ENCODE measurements at regions of chr2 and their contacts with region 1.

Region 1: GRCh38 chr2:177353187-177353478 is 39.4 kb upstream of the AGPS start:
- DNase-seq: no peak
- ATAC-seq: no peak
- H3K4me3 Mint-ChIP-seq: no peak overlapping the region
- H3K27ac Mint-ChIP-seq: no peak overlapping the region
- H3K4me1 Mint-ChIP-seq: peaks cover 3% of the 10 kb centered on the region
- H3K27me3 Mint-ChIP-seq: no peaks in the 10 kb centered on the region
- CTCF ChIP-seq: no peak

Region 2: GRCh38 chr2:177306550-177306949 is 46.6 kb before region 1 on chr2:
- CTCF ChIA-PET with region 1: no interaction called
- POLR2A ChIA-PET with region 1: no interaction called
- intact Hi-C with region 1: no loop called
- DNase-seq: no peak
- ATAC-seq: no peak
- H3K4me3 Mint-ChIP-seq: no peak overlapping the region
- H3K27ac Mint-ChIP-seq: no peak overlapping the region
- H3K4me1 Mint-ChIP-seq: peaks cover 26% of the 10 kb centered on the region
- H3K27me3 Mint-ChIP-seq: no peaks in the 10 kb centered on the region
- CTCF ChIP-seq: no peak

Region 3: DNA sequence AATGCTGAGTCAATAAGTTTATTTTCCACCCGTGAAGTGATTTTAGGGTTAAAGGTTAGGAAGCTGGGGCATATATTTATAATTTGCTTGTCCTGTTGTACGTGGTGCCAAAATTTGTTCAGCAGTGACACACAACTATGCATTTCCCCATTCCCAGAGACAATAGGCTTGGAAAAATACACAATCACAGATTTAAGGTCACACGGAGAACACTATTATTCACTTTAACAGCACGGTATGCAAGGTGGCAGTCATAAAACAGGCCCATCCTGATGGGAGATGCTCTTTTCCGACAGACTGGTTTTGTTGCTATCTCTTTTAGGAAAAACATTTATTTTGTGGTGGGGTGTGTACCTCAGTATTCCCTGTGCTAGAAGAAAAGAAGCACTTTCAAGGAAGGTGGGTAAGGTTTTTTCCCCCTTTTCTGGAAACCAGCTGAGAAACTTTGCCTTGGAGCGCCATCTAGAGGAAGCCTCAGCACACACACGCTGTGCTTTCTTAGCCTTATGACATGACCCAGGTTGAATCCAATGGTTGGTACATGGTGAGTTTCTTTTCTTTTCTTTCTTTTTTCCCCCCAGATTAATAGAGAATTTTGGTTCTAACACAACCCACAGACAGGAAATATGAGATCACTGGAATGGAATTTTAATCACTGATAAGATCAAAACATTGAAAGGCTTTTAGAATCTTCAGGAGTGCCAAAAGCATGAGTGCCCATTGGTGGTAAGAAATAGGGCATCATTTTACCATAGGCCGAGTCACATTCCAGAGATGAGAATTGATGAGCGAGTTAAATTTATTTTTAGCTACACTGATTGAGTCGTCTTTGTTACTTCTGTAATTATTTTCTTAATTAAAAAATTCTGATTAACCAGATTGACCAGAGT is 371.5 kb after region 1 on chr2:
- CTCF ChIA-PET with region 1: interaction called, 3 read pairs
- POLR2A ChIA-PET with region 1: no interaction called
- intact Hi-C with region 1: loop called (anchors 5 kb)
- DNase-seq: peak; percentile 63
- ATAC-seq: peak; percentile 73
- H3K4me3 Mint-ChIP-seq: no peak overlapping the region
- H3K27ac Mint-ChIP-seq: no peak overlapping the region
- H3K4me1 Mint-ChIP-seq: no peaks in the 10 kb centered on the region
- H3K27me3 Mint-ChIP-seq: peaks cover 13% of the 10 kb centered on the region
- CTCF ChIP-seq: peak; percentile 92

Measured in activated CD8-positive, alpha-beta T cell treated with anti-CD3 and anti-CD28 coated beads for 36 hours (primary cell).